Heart right ventricle (tissue), 16 donors: ENCODE measurements at regions of chr15 and their contacts with region 1.

Region 1: DNA sequence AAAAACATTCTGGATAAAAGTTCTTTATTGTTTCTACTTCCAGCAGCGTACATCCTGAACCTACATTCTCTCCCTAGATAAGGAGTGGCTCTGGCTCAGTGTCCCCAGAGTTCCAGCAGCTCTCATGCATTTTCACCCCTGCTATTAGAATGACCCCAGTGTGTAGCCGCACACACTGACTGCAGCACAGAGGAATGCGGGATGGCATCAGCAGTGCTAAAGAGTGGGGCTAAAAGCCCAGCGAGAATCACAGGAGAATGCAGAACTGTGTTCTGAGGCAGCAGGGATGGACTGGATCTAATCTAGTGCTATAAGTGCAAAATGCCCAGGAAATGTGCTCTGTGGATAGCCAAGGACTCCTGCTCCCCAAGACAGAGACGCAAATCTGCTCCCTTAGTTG is 66.4 kb upstream of the TJP1 start:
- DNase-seq: peak in 1 of 2 donors; percentile 39
- ATAC-seq: peak; percentile 83 to 96 (median 88)
- H3K4me3 ChIP-seq: no peak overlapping the region
- H3K27ac ChIP-seq: peak overlapping the region in 8 of 10 donors; percentile 8 to 63 (median 59)
- H3K4me1 ChIP-seq: peaks cover 6 to 59% (median 40%) of the 10 kb centered on the region in 9 donors
- H3K27me3 ChIP-seq: no peaks in the 10 kb centered on the region
- CTCF ChIP-seq: no peak

Region 2: GRCh38 chr15:29740692-29741311 is 147.8 kb before region 1 on chr15:
- intact Hi-C with region 1: no loop called
- DNase-seq: no peak
- ATAC-seq: no peak
- H3K4me3 ChIP-seq: no peak overlapping the region
- H3K27ac ChIP-seq: no peak overlapping the region
- H3K4me1 ChIP-seq: peaks cover 0 to 28% (median 12%) of the 10 kb centered on the region in 9 donors
- H3K27me3 ChIP-seq: no peaks in the 10 kb centered on the region
- CTCF ChIP-seq: peak in 4 of 9 donors; percentile 9 to 26 (median 13)

Region 3: DNA sequence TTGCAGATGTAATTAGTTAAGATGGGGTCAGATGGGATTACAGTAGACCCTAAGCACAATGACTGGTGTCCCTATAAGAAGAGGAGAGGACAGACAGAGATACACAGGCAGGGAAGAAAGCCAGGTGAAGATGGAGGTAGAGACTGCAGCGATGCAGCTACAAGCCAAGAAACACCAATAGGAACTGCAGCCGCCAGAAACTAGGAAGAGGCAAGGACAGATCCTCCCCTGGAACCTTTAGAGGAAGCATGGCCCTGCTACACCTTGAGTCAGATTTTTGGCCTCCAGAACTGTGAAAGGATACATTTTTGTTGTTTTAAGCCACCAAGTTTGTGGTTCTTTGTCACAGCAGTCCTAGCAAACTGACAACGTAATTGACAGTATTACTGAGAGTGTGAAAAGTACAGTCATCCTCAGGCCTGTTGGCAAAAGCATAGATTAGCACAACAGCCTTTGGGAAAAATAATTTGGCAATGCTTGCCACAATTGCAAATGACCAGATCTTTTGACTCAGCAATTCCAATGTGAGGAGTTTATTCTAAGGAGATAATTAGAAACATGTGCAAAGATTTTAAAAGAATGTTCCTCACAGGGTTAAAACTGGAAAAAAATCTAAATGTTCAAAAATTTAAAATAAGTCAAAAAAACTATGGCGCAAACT is 16.2 kb after region 1 on chr15:
- intact Hi-C with region 1: loop called in 1 of 10 experiments (anchors 1 kb)
- DNase-seq: no peak
- ATAC-seq: no peak
- H3K4me3 ChIP-seq: no peak overlapping the region
- H3K27ac ChIP-seq: no peak overlapping the region
- H3K4me1 ChIP-seq: peaks cover 0 to 18% (median 7%) of the 10 kb centered on the region in 9 donors
- H3K27me3 ChIP-seq: no peaks in the 10 kb centered on the region
- CTCF ChIP-seq: no peak